Gastrocnemius medialis (tissue), 4 donors: ENCODE measurements at regions of chr13 and their contacts with region 1.

Region 1: DNA sequence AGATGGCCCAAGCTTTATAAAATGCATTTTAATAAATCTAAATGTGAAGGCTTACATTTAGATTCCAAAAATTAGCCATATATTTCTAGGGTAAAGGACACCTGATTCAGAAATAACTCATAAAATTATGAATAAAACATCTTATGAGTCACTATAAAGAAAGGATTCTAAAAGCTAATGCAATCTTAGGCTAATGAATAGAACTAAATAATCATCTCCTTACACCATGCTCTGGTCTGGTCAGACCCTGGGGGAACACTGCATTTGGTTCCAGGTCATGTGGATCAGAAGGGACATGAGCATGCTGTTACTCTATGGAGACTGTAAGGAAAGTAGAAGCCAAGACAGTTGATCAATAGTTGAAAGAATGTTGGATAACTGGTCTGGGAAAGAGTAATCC is 370.4 kb downstream of the NDFIP2 start:
- DNase-seq: no peak
- ATAC-seq: no peak
- H3K4me3 ChIP-seq: no peak overlapping the region
- H3K27ac ChIP-seq: no peak overlapping the region
- H3K4me1 ChIP-seq: no peaks in the 10 kb centered on the region
- H3K27me3 ChIP-seq: no peaks in the 10 kb centered on the region
- CTCF ChIP-seq: no peak
- POLR2A ChIP-seq: no peak

Region 2: DNA sequence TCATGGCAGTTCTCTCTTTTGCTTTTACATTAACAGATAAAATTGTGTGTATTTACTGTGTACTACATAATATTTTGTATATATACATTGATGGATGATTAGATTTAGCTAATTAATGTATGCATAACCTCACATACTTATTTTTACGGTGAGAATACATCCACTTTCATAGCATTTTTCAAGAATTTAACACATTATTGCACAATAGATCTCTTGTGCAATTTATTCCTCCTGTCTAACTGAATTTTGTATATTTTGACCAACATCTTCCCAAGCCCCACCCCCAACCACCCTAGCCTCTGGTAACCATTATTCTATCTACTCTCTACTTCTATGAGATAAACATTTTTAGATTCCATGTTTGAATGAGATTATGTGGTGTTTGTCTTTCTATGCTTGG is 639.9 kb before region 1 on chr13:
- in situ Hi-C with region 1: no loop called
- intact Hi-C with region 1: no loop called
- DNase-seq: no peak
- ATAC-seq: no peak
- H3K4me3 ChIP-seq: no peak overlapping the region
- H3K27ac ChIP-seq: no peak overlapping the region
- H3K4me1 ChIP-seq: no peaks in the 10 kb centered on the region
- H3K27me3 ChIP-seq: no peaks in the 10 kb centered on the region
- CTCF ChIP-seq: no peak
- POLR2A ChIP-seq: no peak

Region 3: DNA sequence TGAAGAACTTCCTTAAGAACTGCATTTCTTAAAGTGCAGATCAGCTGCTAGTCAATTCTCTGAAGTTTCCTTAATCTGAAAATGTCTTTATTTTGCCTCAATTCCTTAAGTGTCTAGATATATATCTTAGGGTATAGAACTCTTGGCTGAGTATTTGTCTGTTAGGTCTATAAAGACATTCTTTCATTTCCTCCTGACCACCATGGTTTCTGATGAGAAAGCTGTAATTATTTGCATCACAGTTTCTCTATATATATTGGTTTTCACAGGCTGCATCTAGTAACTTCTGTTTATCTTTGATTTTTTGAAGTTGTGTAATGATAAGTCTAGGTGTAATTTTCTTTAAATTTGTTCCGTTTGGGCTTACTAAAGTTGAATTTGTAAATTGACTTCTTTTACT is 355.1 kb before region 1 on chr13:
- in situ Hi-C with region 1: no loop called
- intact Hi-C with region 1: no loop called
- DNase-seq: no peak
- ATAC-seq: no peak
- H3K4me3 ChIP-seq: no peak overlapping the region
- H3K27ac ChIP-seq: no peak overlapping the region
- H3K4me1 ChIP-seq: peaks cover 27 to 44% of the 10 kb centered on the region in 2 donors
- H3K27me3 ChIP-seq: no peaks in the 10 kb centered on the region
- CTCF ChIP-seq: no peak
- POLR2A ChIP-seq: no peak

Region 4: GRCh38 chr13:79803989-79804388 is 47.3 kb before region 1 on chr13:
- in situ Hi-C with region 1: no loop called
- intact Hi-C with region 1: loop called (anchors 10 kb)
- DNase-seq: no peak
- ATAC-seq: no peak
- H3K4me3 ChIP-seq: no peak overlapping the region
- H3K27ac ChIP-seq: no peak overlapping the region
- H3K4me1 ChIP-seq: peaks cover 0 to 3% of the 10 kb centered on the region in 2 donors
- H3K27me3 ChIP-seq: no peaks in the 10 kb centered on the region
- CTCF ChIP-seq: no peak
- POLR2A ChIP-seq: no peak